ENCODE measurements at regions of chr15 and their contacts with region 1.

Region 1: GRCh38 chr15:55434989-55435825 is 26.9 kb downstream of the PIERCE2 start:
- DNase-seq: peak in 1 of 2 experiments; percentile 48
- H3K4me3 ChIP-seq: no peak overlapping the region
- H3K4me3 Mint-ChIP-seq: no peak overlapping the region
- H3K27ac Mint-ChIP-seq: no peak overlapping the region
- H3K4me1 ChIP-seq: 0 out of 2 replicates have a peak, but pooled peaks cover 9% of the 10 kb centered on the region
- H3K4me1 Mint-ChIP-seq: peaks cover 15% of the 10 kb centered on the region
- H3K27me3 ChIP-seq: no peaks in the 10 kb centered on the region
- H3K27me3 Mint-ChIP-seq: no peaks in the 10 kb centered on the region
- CTCF ChIP-seq: peak; percentile 36 to 58

Region 2: DNA sequence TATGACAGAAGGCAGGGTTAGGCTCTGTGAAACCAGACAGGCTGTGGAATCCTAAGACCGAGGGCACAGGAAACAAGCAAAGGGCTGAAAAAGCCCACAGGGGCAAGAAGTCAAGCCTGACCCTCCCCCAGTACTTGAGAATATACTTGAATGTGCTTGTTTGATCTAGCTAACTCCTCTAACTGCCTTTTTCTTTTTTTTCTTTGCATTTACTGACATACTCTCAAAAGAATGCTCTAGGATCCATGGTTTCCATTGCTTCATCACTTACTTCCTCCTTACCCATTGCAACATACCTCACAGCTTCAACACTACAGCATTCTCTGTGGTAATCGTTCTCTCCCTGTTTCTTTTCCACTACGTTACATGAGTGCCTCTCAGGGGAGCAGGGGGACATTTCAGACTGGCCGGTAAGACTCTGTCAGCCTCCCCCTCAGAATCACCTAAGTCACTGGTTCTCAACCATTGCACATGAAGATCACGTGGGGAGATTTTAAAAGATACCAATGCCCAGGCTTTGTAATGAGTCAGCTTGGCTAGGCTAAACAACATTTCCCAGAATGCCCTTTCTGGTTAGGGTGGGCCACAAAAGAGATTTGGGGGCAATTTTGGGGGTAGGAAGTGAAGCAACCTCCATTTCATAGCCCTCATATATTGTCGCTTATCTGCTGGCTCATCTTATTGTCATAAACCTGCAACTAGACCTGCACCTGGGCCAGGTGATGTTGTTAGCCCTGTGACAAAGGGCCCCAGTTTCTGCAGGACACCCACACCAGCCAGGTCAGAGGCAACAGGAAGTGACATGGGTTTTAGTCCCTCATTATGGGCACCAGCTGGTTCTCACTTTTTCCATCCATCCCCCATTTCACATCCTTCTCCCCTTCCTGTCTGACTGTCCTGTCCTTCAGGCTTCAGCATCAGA is 213.9 kb before region 1 on chr15:
- CTCF ChIA-PET with region 1: interaction called, 9 read pairs
- POLR2A ChIA-PET with region 1: no interaction called
- intact Hi-C with region 1: loop called (anchors 1 kb)
- DNase-seq: peak in 1 of 2 experiments; percentile 49
- H3K4me3 ChIP-seq: no peak overlapping the region
- H3K4me3 Mint-ChIP-seq: peak overlapping the region; percentile 1
- H3K27ac Mint-ChIP-seq: peak overlapping the region; percentile 55
- H3K4me1 ChIP-seq: peaks cover 19% of the 10 kb centered on the region
- H3K4me1 Mint-ChIP-seq: peaks cover 14% of the 10 kb centered on the region
- H3K27me3 ChIP-seq: no peaks in the 10 kb centered on the region
- H3K27me3 Mint-ChIP-seq: no peaks in the 10 kb centered on the region
- CTCF ChIP-seq: no peak

Region 3: DNA sequence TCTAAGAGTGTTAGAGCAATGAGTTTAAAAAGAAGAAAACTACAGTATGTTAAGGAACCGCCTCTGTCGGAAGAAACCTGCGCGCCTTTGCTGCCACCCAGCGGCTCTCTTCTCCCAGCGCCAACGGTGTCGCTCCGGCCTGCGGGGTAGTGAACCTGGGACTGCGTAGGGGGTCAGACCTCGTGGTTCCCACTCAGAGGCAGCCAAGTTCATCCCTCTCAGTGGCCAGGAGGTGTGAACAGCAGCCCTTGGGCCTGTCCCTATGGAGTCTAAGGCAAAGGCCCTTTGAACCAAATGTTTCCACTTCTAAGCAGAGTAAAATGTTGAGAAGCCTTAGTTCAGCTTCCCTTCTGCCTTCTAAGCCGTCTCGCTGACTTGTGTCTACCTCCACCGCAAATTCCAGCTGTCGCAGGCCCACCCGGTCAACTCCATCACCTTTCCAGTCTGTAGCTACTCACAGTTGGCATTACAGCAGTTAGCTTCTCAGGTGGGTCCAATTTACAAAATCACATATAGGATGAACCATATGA is 144.6 kb before region 1 on chr15:
- CTCF ChIA-PET with region 1: interaction called, 9 read pairs
- POLR2A ChIA-PET with region 1: no interaction called
- intact Hi-C with region 1: loop called (anchors 1 kb)
- DNase-seq: peak; percentile 74 to 84
- H3K4me3 ChIP-seq: peak overlapping the region; percentile 86
- H3K4me3 Mint-ChIP-seq: peak overlapping the region; percentile 82
- H3K27ac Mint-ChIP-seq: no peak overlapping the region
- H3K4me1 ChIP-seq: no peaks in the 10 kb centered on the region; the same call in 1 of the 2 replicates
- H3K4me1 Mint-ChIP-seq: no peaks in the 10 kb centered on the region
- H3K27me3 ChIP-seq: no peaks in the 10 kb centered on the region
- H3K27me3 Mint-ChIP-seq: no peaks in the 10 kb centered on the region
- CTCF ChIP-seq: peak; percentile 69 to 90

Region 4: DNA sequence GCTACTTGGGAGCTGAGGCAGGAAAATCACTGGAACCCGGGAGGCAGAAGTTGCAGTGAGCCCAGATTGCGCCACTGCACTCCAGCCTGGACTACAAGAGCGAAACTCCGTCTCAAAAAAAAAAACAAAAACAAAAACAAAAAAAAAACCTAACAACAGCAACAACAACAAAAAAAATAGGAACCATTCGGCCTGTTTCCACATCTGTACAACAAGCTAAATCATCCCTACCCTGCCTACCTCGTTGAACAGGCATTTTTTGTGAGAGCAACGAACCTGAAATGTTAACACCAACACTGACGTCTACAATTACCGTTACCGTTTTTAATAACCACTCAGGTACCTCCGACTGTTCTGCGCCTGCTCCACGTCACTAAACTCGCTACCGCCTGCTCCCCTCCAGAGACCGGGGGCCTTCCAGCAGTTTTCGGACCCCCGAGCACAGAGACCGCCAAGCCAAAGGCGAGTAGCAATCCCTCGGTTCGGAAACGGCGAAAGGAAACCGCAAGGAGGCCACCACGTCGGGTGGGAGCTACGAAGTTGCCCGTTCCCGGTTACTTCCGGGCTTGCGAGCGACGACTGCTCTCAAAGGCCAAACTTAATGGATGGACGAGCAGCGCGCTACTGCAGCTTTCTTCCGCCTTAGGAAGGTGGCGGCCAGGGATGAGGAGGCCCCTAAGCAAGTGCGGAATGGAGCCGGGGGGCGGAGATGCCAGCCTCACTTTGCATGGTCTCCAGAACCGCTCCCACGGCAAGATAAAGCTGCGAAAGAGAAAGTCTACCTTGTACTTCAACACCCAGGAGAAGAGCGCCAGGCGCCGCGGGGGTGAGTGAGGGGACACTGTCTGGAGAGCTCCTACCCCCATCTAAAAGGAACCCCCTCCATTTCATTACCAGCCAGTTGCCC is 116.4 kb before region 1 on chr15 and contains the starts of genes PIGB and PIGBOS1:
- CTCF ChIA-PET with region 1: interaction called, 10 read pairs
- POLR2A ChIA-PET with region 1: no interaction called
- intact Hi-C with region 1: loop called (anchors 2 kb)
- DNase-seq: peak; percentile 86 to 89
- H3K4me3 ChIP-seq: peak within 1 kb of the TSS; percentile 64
- H3K4me3 Mint-ChIP-seq: peak within 1 kb of the TSS; percentile 75
- H3K27ac Mint-ChIP-seq: peak within 1 kb of the TSS; percentile 94
- H3K4me1 ChIP-seq: no peaks in the 10 kb centered on the region
- H3K4me1 Mint-ChIP-seq: peaks cover 6% of the 10 kb centered on the region
- H3K27me3 ChIP-seq: no peaks in the 10 kb centered on the region
- H3K27me3 Mint-ChIP-seq: no peaks in the 10 kb centered on the region
- CTCF ChIP-seq: peak in 1 of 2 experiments; percentile 16
- total RNA-seq, gene PIGB: 14.1 and 15.5 TPM in 2 replicates
- total RNA-seq, gene PIGBOS1: 10.9 and 11.7 TPM in 2 replicates

Region 5: GRCh38 chr15:55407949-55408791 is 27.0 kb before region 1 on chr15 and contains the starts of genes CCPG1 and PIERCE2:
- CTCF ChIA-PET with region 1: interaction called, 14 read pairs
- POLR2A ChIA-PET with region 1: no interaction called
- intact Hi-C with region 1: loop called (anchors 1 kb)
- DNase-seq: peak; percentile 91 to 95
- H3K4me3 ChIP-seq: peak within 1 kb of the TSS; percentile 59
- H3K4me3 Mint-ChIP-seq: peak within 1 kb of the TSS; percentile 91
- H3K27ac Mint-ChIP-seq: peak within 1 kb of the TSS; percentile 85
- H3K4me1 ChIP-seq: peaks cover 12% of the 10 kb centered on the region
- H3K4me1 Mint-ChIP-seq: peaks cover 7% of the 10 kb centered on the region
- H3K27me3 ChIP-seq: no peaks in the 10 kb centered on the region
- H3K27me3 Mint-ChIP-seq: no peaks in the 10 kb centered on the region
- CTCF ChIP-seq: peak; percentile 68 to 78
- total RNA-seq, gene CCPG1: 51.6 and 54.6 TPM in 2 replicates
- total RNA-seq, gene PIERCE2: 1.3 TPM in 1 of 2 replicates, not detected in the other

Region 6: GRCh38 chr15:55799291-55800212 is 364.3 kb after region 1 on chr15:
- CTCF ChIA-PET with region 1: no interaction called
- POLR2A ChIA-PET with region 1: no interaction called
- intact Hi-C with region 1: loop called (anchors 5 kb)
- DNase-seq: peak; percentile 68 to 76
- H3K4me3 ChIP-seq: no peak overlapping the region
- H3K4me3 Mint-ChIP-seq: no peak overlapping the region
- H3K27ac Mint-ChIP-seq: peak overlapping the region; percentile 40
- H3K4me1 ChIP-seq: no peaks in the 10 kb centered on the region
- H3K4me1 Mint-ChIP-seq: no peaks in the 10 kb centered on the region
- H3K27me3 ChIP-seq: no peaks in the 10 kb centered on the region
- H3K27me3 Mint-ChIP-seq: no peaks in the 10 kb centered on the region
- CTCF ChIP-seq: peak; percentile 67 to 73

Measured in Caco-2 (cell line).